Endothelial cell of umbilical vein (primary cell): ENCODE measurements at regions of chr16 and their contacts with region 1.

Region 1: DNA sequence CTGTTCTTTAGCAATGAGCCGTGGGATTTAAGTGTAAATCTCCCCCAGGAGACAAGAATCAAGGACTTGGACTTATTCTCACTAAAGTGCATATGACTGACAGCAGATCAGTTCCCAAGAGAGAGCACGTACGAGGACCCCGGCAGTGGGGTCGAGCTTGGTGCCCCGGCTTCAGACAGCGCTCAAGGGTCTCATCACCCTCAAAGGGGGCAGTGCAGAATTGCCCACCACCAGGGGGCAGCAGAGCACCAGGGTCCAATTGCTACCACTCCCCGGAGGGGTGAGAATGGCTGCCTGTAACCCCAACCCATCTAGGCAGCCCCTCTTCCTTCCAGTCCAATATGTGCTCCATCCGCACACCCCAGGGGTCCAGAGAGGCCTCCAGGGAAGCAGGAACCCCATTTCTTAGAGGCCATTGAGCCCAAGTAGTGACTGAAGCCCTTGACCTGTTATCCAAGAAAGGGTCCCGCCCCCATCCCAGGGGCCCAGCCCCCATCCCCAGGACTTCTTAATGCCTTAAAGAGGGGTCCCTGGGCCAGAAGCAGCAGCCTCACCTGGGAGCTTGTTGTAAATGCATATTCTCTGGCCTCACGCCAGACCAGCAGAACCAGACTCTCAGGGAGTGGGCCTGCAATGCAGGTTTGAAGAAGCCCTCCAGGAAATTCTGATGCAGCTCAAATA is 86.1 kb downstream of the ZDHHC7 start:
- DNase-seq: peak; percentile 23
- H3K4me3 ChIP-seq: no peak overlapping the region
- H3K27ac ChIP-seq: no peak overlapping the region
- H3K4me1 ChIP-seq: no peaks in the 10 kb centered on the region
- H3K27me3 ChIP-seq: no peaks in the 10 kb centered on the region
- CTCF ChIP-seq: peak; percentile 65 to 87
- POLR2A ChIP-seq: no peak

Region 2: GRCh38 chr16:84156342-84156784 is 768.9 kb before region 1 on chr16:
- CTCF ChIA-PET with region 1: no interaction called
- POLR2A ChIA-PET with region 1: no interaction called
- dilution Hi-C with region 1: no loop called
- intact Hi-C with region 1: loop called (anchors 5 kb)
- DNase-seq: no peak
- H3K4me3 ChIP-seq: no peak overlapping the region
- H3K27ac ChIP-seq: no peak overlapping the region
- H3K4me1 ChIP-seq: no peaks in the 10 kb centered on the region
- H3K27me3 ChIP-seq: peaks cover 22 to 23% of the 10 kb centered on the region in 2 experiments
- CTCF ChIP-seq: no peak
- POLR2A ChIP-seq: no peak